Aorta (tissue), 5 donors: ENCODE measurements at regions of chr14 and their contacts with region 1.

Region 1: GRCh38 chr14:91177073-91178034 is 63.5 kb downstream of the DGLUCY start:
- DNase-seq: peak; percentile 56 to 73
- ATAC-seq: peak; percentile 71
- H3K4me3 ChIP-seq: no peak overlapping the region
- H3K27ac ChIP-seq: no peak overlapping the region
- H3K4me1 ChIP-seq: no peaks in the 10 kb centered on the region
- H3K27me3 ChIP-seq: no peaks in the 10 kb centered on the region

Region 2: DNA sequence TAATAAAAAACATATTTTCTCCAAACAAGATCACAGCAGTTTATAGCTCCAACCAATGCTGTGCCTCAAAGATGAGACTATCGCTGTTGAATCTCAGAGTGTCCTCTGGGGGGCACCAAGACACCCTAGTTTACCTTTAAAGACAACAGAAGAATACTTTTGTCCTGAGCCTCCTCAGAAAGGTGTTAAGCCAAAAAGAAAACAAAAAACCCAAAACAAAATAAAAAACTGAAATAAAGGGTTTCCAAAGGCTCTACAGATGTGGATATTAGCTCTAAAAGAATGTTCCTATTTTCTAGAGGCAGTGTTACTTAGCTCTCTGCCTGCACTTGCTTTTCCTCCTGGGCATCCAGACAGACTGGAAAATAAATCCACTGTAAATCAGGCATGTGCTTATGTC is 274.3 kb before region 1 on chr14:
- intact Hi-C with region 1: loop called (anchors 1 to 2 kb)
- DNase-seq: peak in 1 of 2 donors; percentile 57
- ATAC-seq: peak; percentile 83
- H3K4me3 ChIP-seq: no peak overlapping the region
- H3K27ac ChIP-seq: no peak overlapping the region
- H3K4me1 ChIP-seq: no peaks in the 10 kb centered on the region
- H3K27me3 ChIP-seq: no peaks in the 10 kb centered on the region

Region 3: DNA sequence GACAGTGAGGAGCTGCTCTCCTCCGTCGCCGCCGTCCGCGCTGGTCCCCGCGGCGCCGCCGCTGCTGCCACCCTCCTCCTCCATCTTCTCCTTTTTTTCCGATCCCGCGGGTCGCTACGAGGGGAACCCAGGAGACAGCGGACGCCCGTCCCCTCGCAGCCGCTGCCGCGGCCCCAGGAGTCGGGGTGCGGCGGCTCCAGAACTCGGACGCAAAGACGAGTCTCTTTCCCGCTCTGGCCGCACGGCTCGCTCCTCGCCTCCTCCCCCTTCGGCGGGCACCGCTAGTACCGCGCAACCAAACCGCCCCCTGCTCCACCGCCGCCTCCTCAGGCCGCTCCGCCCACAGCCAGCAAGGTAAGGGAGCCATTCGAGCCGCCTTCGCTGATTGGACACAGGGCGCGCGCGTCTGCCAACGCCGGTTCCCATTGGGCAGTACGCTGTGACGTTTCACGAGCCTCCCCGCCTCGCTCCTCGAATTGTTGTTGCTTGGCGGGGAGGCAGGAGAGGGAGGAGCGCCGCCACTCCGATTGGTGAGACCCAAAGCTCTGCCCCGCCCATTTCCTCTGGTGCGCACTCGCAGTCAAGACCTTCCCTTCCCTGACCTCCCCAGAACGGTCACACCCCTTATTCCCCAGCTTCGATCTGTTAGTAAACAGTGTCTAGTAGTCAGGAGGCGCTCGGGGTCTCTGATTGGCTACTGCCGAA is 116.9 kb before region 1 on chr14 and contains the start of gene RPS6KA5:
- intact Hi-C with region 1: loop called (anchors 5 kb)
- DNase-seq: peak; percentile 100
- ATAC-seq: peak; percentile 98
- H3K4me3 ChIP-seq: peak within 1 kb of the TSS; percentile 76 to 78
- H3K27ac ChIP-seq: peak within 1 kb of the TSS; percentile 23 to 87
- H3K4me1 ChIP-seq: no peaks in the 10 kb centered on the region
- H3K27me3 ChIP-seq: no peaks in the 10 kb centered on the region
- total RNA-seq, gene RPS6KA5: 4.4 to 10.0 TPM

Region 4: GRCh38 chr14:91138511-91139359 is 38.6 kb before region 1 on chr14:
- intact Hi-C with region 1: loop called in 1 of 2 experiments (anchors 5 kb)
- DNase-seq: no peak
- ATAC-seq: no peak
- H3K4me3 ChIP-seq: no peak overlapping the region
- H3K27ac ChIP-seq: no peak overlapping the region
- H3K4me1 ChIP-seq: no peaks in the 10 kb centered on the region
- H3K27me3 ChIP-seq: no peaks in the 10 kb centered on the region

Region 5: DNA sequence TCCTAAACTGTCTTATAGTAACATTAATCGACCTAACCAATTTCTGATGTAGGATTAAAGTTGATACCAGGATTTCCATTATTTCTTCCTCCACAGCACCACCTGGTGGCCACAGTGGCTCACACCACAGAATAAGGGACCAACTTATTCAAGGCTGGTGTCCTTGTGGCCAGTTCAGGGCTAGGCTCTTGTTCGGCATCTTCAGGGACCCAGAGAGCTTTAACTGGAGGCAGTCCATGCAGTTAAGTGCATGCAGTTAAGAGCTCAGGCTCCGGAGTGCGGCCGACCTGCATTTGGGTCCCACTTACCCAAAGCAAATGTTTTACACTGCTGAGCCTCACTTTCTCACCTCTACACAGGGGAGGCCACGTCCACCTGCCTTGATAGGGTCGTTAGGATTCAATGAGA is 109.2 kb after region 1 on chr14:
- intact Hi-C with region 1: loop called (anchors 1 to 5 kb)
- DNase-seq: peak; percentile 78 to 91
- ATAC-seq: peak; percentile 70
- H3K4me3 ChIP-seq: no peak overlapping the region
- H3K27ac ChIP-seq: no peak overlapping the region
- H3K4me1 ChIP-seq: no peaks in the 10 kb centered on the region
- H3K27me3 ChIP-seq: no peaks in the 10 kb centered on the region